ENCODE measurements at regions of chr6 and their contacts with region 1.

Region 1: GRCh38 chr6:28683944-28684538 is 158.4 kb downstream of the GPX5 start:
- DNase-seq: no peak
- ATAC-seq: peak; percentile 67

Region 2: DNA sequence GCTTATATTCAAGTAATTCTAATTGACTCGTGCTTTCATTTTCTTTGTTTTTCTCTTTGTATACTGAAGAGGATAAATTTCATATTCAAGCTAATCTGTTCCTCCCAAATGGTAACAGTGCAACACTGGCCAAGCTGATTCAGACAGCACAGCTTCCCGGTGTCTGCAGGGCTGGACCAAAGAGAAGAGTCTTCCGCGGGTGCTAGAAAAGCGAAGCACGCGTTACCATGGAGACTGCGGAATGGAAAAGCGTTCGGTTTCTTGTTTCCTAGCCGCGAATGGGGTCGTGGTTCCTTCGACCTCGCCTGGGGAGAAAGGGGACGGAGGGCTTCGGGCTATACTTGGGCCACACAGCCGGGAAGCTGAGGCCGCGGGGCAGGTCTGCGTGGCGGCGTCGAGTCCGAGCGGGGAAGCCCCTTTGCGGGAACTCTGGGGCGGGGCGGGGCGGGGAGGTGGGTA is 327.3 kb after region 1 on chr6:
- intact Hi-C with region 1: loop called (anchors 5 to 10 kb)
- DNase-seq: peak; percentile 28 to 33
- ATAC-seq: peak; percentile 55

Region 3: GRCh38 chr6:29016559-29017427 is 332.8 kb after region 1 on chr6:
- intact Hi-C with region 1: loop called (anchors 5 to 10 kb)
- DNase-seq: peak; percentile 68 to 89
- ATAC-seq: peak; percentile 96

Region 4: GRCh38 chr6:29589423-29590048 is 905.5 kb after region 1 on chr6:
- intact Hi-C with region 1: loop called in 1 of 2 experiments (anchors 10 kb)
- DNase-seq: peak in 1 of 2 donors; percentile 30
- ATAC-seq: peak; percentile 81

Measured in left colon (tissue), 2 donors.